ENCODE measurements at regions of chr5 and their contacts with region 1.

Region 1: DNA sequence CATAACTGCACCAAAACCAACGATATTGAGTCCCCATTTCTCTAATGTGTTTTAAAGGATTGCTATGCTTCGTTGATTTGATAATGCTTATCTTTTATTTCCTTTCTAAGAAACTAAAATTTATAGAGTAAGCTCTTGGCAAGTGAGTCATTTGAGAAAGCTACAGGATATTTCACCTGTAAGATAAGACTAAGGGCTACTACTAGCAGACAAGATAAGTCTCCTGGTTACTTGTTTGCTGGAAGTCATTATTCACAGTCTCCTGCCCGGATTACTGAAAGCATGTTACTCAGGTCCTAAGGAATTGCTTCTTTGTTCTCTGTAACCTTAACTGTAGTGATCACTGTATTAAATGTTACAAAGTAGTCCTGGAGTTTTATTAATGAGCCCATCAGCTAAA is 315.9 kb upstream of the RASA1 start:
- DNase-seq: no peak
- ATAC-seq: no peak
- H3K4me3 ChIP-seq: no peak overlapping the region
- H3K27ac ChIP-seq: no peak overlapping the region
- H3K4me1 ChIP-seq: no peaks in the 10 kb centered on the region
- H3K27me3 ChIP-seq: no peaks in the 10 kb centered on the region
- CTCF ChIP-seq: no peak
- POLR2A ChIP-seq: no peak
- RAD21 ChIP-seq: no peak

Region 2: DNA sequence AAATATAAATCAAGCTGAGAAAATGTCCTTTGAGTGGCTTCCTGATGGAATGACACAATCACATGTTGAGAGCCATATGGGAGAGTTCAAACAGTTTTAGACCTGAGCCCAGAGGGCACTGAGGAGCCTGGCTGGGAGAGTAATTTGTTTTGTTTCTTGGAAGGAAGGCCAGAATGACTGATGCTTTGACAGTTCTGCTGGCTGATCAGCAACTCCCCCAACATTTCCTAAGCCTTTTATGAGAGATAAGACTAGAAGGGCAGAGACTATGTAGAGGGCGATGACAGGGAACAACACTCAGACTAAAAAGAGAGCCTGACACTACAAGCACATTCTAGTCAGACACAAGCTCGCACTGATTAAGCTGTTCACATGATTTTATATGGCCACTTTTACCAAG is 164.8 kb before region 1 on chr5:
- CTCF ChIA-PET with region 1: no interaction called
- POLR2A ChIA-PET with region 1: no interaction called
- dilution Hi-C with region 1: no loop called
- in situ Hi-C with region 1: no loop called
- intact Hi-C with region 1: no loop called
- DNase-seq: no peak
- ATAC-seq: no peak
- H3K4me3 ChIP-seq: no peak overlapping the region
- H3K27ac ChIP-seq: no peak overlapping the region
- H3K4me1 ChIP-seq: no peaks in the 10 kb centered on the region
- H3K27me3 ChIP-seq: no peaks in the 10 kb centered on the region
- CTCF ChIP-seq: no peak
- POLR2A ChIP-seq: no peak
- RAD21 ChIP-seq: no peak

Region 3: GRCh38 chr5:86814315-86814714 is 137.4 kb before region 1 on chr5:
- CTCF ChIA-PET with region 1: no interaction called
- POLR2A ChIA-PET with region 1: no interaction called
- dilution Hi-C with region 1: no loop called
- in situ Hi-C with region 1: no loop called
- intact Hi-C with region 1: no loop called
- DNase-seq: no peak
- ATAC-seq: no peak
- H3K4me3 ChIP-seq: no peak overlapping the region
- H3K27ac ChIP-seq: no peak overlapping the region
- H3K4me1 ChIP-seq: no peaks in the 10 kb centered on the region
- H3K27me3 ChIP-seq: no peaks in the 10 kb centered on the region
- CTCF ChIP-seq: no peak
- POLR2A ChIP-seq: no peak
- RAD21 ChIP-seq: no peak

Region 4: DNA sequence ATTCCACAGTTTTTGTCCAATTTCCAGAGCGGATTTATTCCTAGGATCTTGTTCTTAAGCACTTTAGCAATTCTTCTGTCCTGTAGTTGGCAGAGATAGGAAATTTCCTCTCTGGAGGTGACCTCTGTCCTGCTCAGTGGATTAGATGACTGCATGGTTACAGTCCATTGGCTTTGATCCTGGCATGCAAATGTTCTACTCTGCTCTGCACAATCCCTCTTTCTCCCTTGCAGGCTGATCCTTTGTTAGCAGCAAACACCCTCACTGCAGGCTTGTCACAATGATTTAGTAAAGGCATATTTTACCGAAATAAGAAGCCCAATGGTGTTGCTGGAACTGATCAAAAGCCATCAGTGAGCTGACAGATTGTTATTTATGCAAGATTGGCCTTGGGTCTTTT is 90.2 kb before region 1 on chr5:
- CTCF ChIA-PET with region 1: no interaction called
- POLR2A ChIA-PET with region 1: no interaction called
- dilution Hi-C with region 1: no loop called
- in situ Hi-C with region 1: no loop called
- intact Hi-C with region 1: no loop called
- DNase-seq: no peak
- ATAC-seq: no peak
- H3K4me3 ChIP-seq: no peak overlapping the region
- H3K27ac ChIP-seq: no peak overlapping the region
- H3K4me1 ChIP-seq: no peaks in the 10 kb centered on the region
- H3K27me3 ChIP-seq: no peaks in the 10 kb centered on the region
- CTCF ChIP-seq: no peak
- POLR2A ChIP-seq: no peak
- RAD21 ChIP-seq: no peak

Region 5: GRCh38 chr5:86894006-86894560 is 57.7 kb before region 1 on chr5:
- CTCF ChIA-PET with region 1: no interaction called
- POLR2A ChIA-PET with region 1: no interaction called
- dilution Hi-C with region 1: no loop called
- in situ Hi-C with region 1: no loop called
- intact Hi-C with region 1: loop called (anchors 5 kb)
- DNase-seq: peak; percentile 10
- ATAC-seq: peak; percentile 60
- H3K4me3 ChIP-seq: no peak overlapping the region
- H3K27ac ChIP-seq: no peak overlapping the region
- H3K4me1 ChIP-seq: no peaks in the 10 kb centered on the region
- H3K27me3 ChIP-seq: no peaks in the 10 kb centered on the region
- CTCF ChIP-seq: no peak
- POLR2A ChIP-seq: no peak
- RAD21 ChIP-seq: no peak

Region 6: DNA sequence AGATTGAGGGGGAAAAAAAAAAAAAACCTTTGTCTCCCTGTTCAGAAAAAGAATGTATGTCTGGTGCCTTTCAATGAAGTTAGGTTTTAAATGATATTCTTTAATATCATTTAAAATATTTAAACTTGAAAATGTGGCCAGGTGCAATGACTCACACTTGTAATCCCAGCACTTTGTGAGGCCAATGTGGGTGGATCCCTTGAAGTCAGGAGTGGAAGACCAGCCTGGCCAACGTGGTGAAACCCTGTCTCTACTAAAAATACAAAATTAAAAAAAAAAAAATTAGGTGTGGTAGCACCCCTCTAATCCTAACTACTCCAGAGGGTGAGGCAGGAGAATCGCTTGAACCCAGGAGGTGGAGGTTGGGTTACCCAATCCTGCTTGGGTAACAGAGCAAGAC is 204.9 kb after region 1 on chr5:
- CTCF ChIA-PET with region 1: no interaction called
- POLR2A ChIA-PET with region 1: no interaction called
- dilution Hi-C with region 1: no loop called
- in situ Hi-C with region 1: no loop called
- intact Hi-C with region 1: no loop called
- DNase-seq: no peak
- ATAC-seq: no peak
- H3K4me3 ChIP-seq: no peak overlapping the region
- H3K27ac ChIP-seq: no peak overlapping the region
- H3K4me1 ChIP-seq: no peaks in the 10 kb centered on the region
- H3K27me3 ChIP-seq: no peaks in the 10 kb centered on the region
- CTCF ChIP-seq: no peak
- POLR2A ChIP-seq: no peak
- RAD21 ChIP-seq: no peak

Measured in IMR-90 (cell line).